Left cardiac atrium (tissue), 4 donors: ENCODE measurements at regions of chr1 and their contacts with region 1.

Region 1: DNA sequence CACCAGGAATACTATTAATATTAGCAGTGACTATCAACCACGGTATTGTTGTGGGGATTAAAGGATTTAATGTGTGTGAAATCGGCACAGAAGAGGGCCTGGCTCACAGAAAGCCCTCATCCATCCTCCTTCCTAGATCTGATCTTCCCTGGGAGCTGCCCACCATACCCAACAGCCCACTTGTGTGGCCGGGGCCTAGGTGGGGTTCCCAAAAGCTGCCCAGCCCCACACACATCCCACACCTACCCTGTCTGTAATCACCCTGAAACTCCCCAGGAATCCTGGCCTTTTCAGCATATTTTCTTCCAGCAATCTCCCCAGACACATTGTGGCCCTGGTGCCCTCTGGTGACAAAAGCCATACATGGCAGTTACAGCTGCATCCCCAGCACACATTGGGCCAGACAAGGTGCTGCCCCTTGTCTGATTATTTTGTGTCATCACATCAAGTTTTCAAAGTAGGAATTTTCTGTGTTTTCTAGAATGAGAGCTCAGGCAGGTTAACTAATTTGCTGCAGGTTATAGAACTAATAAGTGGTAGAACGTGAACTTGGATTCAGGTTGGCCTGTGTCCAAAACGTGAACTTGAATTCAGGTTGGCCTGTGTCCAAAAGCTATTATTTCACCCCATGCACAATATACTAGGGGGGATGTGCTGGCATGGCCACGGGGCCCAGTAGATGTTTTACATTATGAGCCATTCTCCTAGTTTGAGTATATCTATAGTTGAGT is 5.3 kb upstream of the SLC6A9 start:
- DNase-seq: peak; percentile 68
- ATAC-seq: peak; percentile 72 to 74

Region 2: GRCh38 chr1:44002606-44003157 is 33.9 kb before region 1 on chr1:
- intact Hi-C with region 1: loop called (anchors 5 kb)
- DNase-seq: no peak
- ATAC-seq: no peak